ENCODE measurements at regions of chr9 and their contacts with region 1.

Region 1: DNA sequence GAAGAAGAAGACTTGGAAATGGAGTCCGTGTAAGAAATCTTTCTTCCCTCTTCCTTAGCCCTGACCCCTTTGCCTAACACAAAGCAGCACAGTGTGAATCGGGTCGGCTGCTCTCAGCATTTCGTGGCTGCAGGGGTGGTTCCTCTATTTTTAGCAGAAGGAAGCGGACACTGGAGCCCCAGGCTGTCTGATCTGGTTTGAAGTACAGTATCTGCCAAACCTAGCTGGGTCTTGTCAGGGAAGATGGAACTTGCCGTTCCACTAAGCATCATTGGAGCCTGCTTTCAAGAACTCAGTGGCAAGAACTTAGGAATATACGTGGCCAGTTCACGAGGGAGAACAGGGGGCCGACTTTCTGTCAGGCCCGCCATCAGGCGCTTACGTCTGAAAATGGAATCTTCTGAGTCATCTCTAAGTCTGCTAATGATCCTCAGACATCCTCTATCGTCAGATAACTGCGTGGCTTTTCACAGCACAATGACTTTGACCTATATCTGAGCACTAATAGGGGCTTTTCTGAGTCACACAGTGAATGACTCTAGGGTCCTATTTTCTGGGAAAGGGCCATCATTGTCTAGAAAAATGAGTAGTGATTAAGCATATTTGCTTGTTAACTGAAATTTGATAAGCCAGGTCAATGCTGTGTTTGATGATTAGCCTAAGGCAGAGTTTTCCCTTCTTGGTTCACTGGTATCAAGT is 43.3 kb upstream of the NCS1 start:
- DNase-seq: peak in 7 of 9 donors; percentile 13 to 68 (median 21)
- ATAC-seq: peak; percentile 73
- H3K4me3 ChIP-seq: peak overlapping the region; percentile 52
- H3K4me3 Mint-ChIP-seq: peak overlapping the region; percentile 76 to 93 (median 82)
- H3K27ac ChIP-seq: peak overlapping the region; percentile 66
- H3K27ac Mint-ChIP-seq: peak overlapping the region; percentile 89 to 99 (median 95)
- H3K4me1 ChIP-seq: peaks cover 53 to 55% of the 10 kb centered on the region in 2 donors
- H3K4me1 Mint-ChIP-seq: peaks cover 44 to 72% (median 60%) of the 10 kb centered on the region in 7 donors
- H3K27me3 ChIP-seq: no peaks in the 10 kb centered on the region
- H3K27me3 Mint-ChIP-seq: no peaks in the 10 kb centered on the region

Region 2: DNA sequence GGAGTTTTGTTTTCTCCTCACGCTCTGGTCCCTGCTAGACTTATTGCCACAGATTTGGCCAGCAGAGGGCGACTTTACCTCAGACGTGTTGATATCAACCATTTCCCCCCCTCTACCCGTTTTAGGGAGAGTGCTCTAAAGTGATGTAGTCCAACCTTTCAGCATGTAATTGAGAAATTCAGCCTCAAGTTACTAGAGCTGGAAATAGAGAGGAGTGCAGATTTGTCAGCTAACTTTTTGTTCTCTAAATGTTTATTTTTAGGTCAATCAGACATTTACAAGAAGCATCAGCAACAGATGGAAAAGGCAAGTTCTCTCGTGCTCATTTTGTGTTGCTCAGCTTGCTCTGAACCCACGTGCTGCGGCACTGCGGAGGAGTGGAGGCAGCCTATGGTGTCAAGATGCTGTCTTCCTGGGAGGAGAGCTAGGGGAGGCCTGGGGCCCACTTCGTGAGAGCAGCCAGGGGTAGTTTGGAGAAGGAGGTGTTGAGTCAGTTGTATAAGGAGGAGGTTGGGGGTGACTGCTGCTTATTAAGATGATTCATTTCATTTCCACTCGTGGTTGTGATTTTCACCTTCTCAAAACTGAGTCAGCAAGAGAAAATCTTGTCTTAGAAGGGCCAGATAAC is 21.5 kb before region 1 on chr9:
- CTCF ChIA-PET with region 1: interaction called, 12 read pairs
- POLR2A ChIA-PET with region 1: interaction called, 3 read pairs
- intact Hi-C with region 1: loop called (anchors 1 kb)
- DNase-seq: peak; percentile 61 to 84 (median 75)
- ATAC-seq: peak; percentile 91
- H3K4me3 ChIP-seq: no peak overlapping the region
- H3K4me3 Mint-ChIP-seq: no peak overlapping the region
- H3K27ac ChIP-seq: no peak overlapping the region
- H3K27ac Mint-ChIP-seq: peak overlapping the region in 3 of 9 donors; percentile 42 to 47 (median 42)
- H3K4me1 ChIP-seq: peaks cover 3 to 9% of the 10 kb centered on the region in 2 donors
- H3K4me1 Mint-ChIP-seq: peaks cover 8 to 29% (median 19%) of the 10 kb centered on the region in 7 donors
- H3K27me3 ChIP-seq: no peaks in the 10 kb centered on the region
- H3K27me3 Mint-ChIP-seq: no peaks in the 10 kb centered on the region

Region 3: GRCh38 chr9:130172161-130172857 is 43.4 kb after region 1 on chr9 and contains the start of gene NCS1:
- CTCF ChIA-PET with region 1: no interaction called
- POLR2A ChIA-PET with region 1: no interaction called
- intact Hi-C with region 1: loop called in 1 of 2 experiments (anchors 5 kb)
- DNase-seq: peak in 3 of 9 donors; percentile 4 to 48 (median 7)
- ATAC-seq: peak; percentile 62
- H3K4me3 ChIP-seq: no peak within 1 kb of the TSS
- H3K4me3 Mint-ChIP-seq: peak within 1 kb of the TSS; percentile 69 to 88 (median 80)
- H3K27ac ChIP-seq: no peak within 1 kb of the TSS
- H3K27ac Mint-ChIP-seq: peak within 1 kb of the TSS in 1 of 9 donors; percentile 37
- H3K4me1 ChIP-seq: peaks cover 0 to 5% of the 10 kb centered on the region in 2 donors
- H3K4me1 Mint-ChIP-seq: peaks cover 0 to 12% (median 9%) of the 10 kb centered on the region in 7 donors
- H3K27me3 ChIP-seq: peaks cover 0 to 3% of the 10 kb centered on the region in 2 donors
- H3K27me3 Mint-ChIP-seq: peaks cover 9 to 48% (median 18%) of the 10 kb centered on the region in 5 donors
- total RNA-seq, gene NCS1: 0.14 to 0.85 (median 0.22) TPM in 3 of 5 experiments, not detected in the others

Region 4: GRCh38 chr9:130235897-130236668 is 107.2 kb after region 1 on chr9:
- CTCF ChIA-PET with region 1: interaction called, 4 read pairs
- POLR2A ChIA-PET with region 1: interaction called, 4 read pairs
- intact Hi-C with region 1: loop called (anchors 2 to 5 kb)
- DNase-seq: peak; percentile 41 to 79 (median 63)
- ATAC-seq: peak; percentile 79
- H3K4me3 ChIP-seq: no peak overlapping the region
- H3K4me3 Mint-ChIP-seq: peak overlapping the region in 7 of 10 donors; percentile 24 to 75 (median 54)
- H3K27ac ChIP-seq: no peak overlapping the region
- H3K27ac Mint-ChIP-seq: peak overlapping the region in 1 of 9 donors; percentile 43
- H3K4me1 ChIP-seq: peaks cover 7 to 11% of the 10 kb centered on the region in 2 donors
- H3K4me1 Mint-ChIP-seq: peaks cover 0 to 25% (median 15%) of the 10 kb centered on the region in 7 donors
- H3K27me3 ChIP-seq: no peaks in the 10 kb centered on the region
- H3K27me3 Mint-ChIP-seq: peaks cover 0 to 2% (median 0%) of the 10 kb centered on the region in 5 donors

Region 5: GRCh38 chr9:130243015-130243734 is 114.3 kb after region 1 on chr9:
- CTCF ChIA-PET with region 1: no interaction called
- POLR2A ChIA-PET with region 1: interaction called, 4 read pairs
- intact Hi-C with region 1: loop called in 1 of 2 experiments (anchors 5 kb)
- DNase-seq: peak; percentile 42 to 81 (median 68)
- ATAC-seq: peak; percentile 91
- H3K4me3 ChIP-seq: peak overlapping the region; percentile 44
- H3K4me3 Mint-ChIP-seq: peak overlapping the region; percentile 11 to 83 (median 58)
- H3K27ac ChIP-seq: no peak overlapping the region
- H3K27ac Mint-ChIP-seq: peak overlapping the region in 1 of 9 donors; percentile 26
- H3K4me1 ChIP-seq: peaks cover 7 to 16% of the 10 kb centered on the region in 2 donors
- H3K4me1 Mint-ChIP-seq: peaks cover 8 to 32% (median 21%) of the 10 kb centered on the region in 7 donors
- H3K27me3 ChIP-seq: no peaks in the 10 kb centered on the region
- H3K27me3 Mint-ChIP-seq: no peaks in the 10 kb centered on the region

Region 6: DNA sequence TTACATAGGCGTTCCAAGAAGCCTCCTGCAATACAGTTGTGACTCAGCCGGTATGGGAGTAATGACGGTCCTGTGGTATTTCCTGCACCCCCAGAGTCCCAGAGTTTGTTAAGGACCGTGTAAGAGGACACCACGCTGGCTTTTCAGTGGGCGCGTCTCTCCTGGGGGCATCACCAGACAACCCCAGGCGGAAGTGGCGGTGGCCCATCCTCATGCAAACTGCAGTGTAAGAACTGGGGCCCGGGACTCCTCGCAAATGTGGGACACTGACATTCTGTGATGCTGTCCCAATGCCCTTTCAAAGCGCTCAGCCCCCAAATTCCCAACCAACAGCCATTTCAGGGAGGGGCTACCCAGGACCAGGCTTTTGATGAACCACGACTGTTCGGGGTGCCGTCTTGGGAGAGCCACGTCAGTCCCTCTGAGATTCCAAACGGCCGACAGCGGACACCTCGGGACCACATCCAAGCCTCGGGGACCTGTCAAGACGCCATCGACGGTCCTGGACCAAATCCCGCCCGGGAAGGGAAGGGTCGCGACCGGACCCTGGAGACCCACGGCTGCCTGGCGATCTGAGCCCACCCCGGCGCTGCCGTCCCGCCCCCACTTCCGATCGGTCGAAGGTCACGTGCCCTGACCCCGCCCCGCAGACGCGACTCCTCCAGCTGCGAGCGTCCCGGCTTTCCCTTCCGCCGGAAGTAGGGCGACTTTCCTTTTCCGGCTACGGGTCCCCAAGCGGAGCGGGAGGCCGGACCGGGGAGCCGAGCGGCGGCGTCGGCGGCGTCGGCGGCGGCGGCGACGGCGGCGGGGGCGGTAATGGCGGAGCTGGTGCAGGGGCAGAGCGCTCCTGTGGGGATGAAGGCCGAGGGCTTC is 450.2 kb after region 1 on chr9 and contains the start of gene FUBP3:
- CTCF ChIA-PET with region 1: no interaction called
- POLR2A ChIA-PET with region 1: no interaction called
- intact Hi-C with region 1: loop called in 1 of 2 experiments (anchors 5 kb)
- DNase-seq: peak; percentile 63 to 93 (median 78)
- ATAC-seq: peak; percentile 92
- H3K4me3 ChIP-seq: peak within 1 kb of the TSS; percentile 99
- H3K4me3 Mint-ChIP-seq: peak within 1 kb of the TSS; percentile 87 to 97 (median 92)
- H3K27ac ChIP-seq: peak within 1 kb of the TSS; percentile 85
- H3K27ac Mint-ChIP-seq: peak within 1 kb of the TSS; percentile 78 to 98 (median 92)
- H3K4me1 ChIP-seq: peaks cover 6 to 15% of the 10 kb centered on the region in 2 donors
- H3K4me1 Mint-ChIP-seq: peaks cover 22 to 58% (median 54%) of the 10 kb centered on the region in 7 donors
- H3K27me3 ChIP-seq: no peaks in the 10 kb centered on the region
- H3K27me3 Mint-ChIP-seq: peaks cover 0 to 5% (median 0%) of the 10 kb centered on the region in 5 donors
- total RNA-seq, gene FUBP3: 34.3 to 49.6 (median 40.5) TPM